ENCODE measurements at regions of chr10 and their contacts with region 1.

Region 1: DNA sequence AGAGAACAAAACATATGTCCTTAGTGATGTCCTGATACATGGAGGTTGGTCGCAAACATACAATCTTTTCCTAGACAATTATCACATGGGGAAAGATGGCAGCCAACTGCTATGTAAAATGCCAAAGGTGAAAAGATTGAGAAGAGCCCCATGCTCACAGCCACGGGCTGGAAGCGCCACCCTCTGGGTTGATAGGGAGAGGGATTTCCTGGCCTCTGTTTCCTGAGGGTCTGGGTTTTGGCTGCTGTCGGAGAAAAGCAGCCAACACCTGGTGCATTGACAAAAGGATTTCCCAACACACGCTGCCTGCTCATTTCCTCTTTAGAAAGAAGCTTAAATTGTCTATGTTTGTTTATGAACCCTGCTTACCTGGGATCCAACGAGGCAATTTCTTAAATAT is 43.8 kb downstream of the ITIH5 start:
- DNase-seq: peak in 1 of 2 experiments; percentile 59
- H3K4me3 ChIP-seq: no peak overlapping the region
- H3K27ac ChIP-seq: no peak overlapping the region
- H3K4me1 ChIP-seq: peaks cover 0 to 3% (median 0%) of the 10 kb centered on the region in 4 experiments; a peak in 1 of 7 replicates
- H3K27me3 ChIP-seq: no peaks in the 10 kb centered on the region
- CTCF ChIP-seq: peak; percentile 63 to 81 (median 73)
- EP300 ChIP-seq: no peak
- POLR2A ChIP-seq: no peak
- RAD21 ChIP-seq: peak; percentile 88 to 90

Region 2: GRCh38 chr10:7533657-7534479 is 89.1 kb before region 1 on chr10:
- CTCF ChIA-PET with region 1: interaction called, 26 read pairs
- POLR2A ChIA-PET with region 1: no interaction called
- DNase-seq: no peak
- H3K4me3 ChIP-seq: no peak overlapping the region
- H3K27ac ChIP-seq: no peak overlapping the region
- H3K4me1 ChIP-seq: 0 out of 7 replicates have a peak, but pooled peaks cover 0 to 3% (median 0%) of the 10 kb centered on the region in 4 experiments
- H3K27me3 ChIP-seq: no peaks in the 10 kb centered on the region
- CTCF ChIP-seq: no peak
- EP300 ChIP-seq: no peak
- POLR2A ChIP-seq: no peak
- RAD21 ChIP-seq: no peak

Region 3: DNA sequence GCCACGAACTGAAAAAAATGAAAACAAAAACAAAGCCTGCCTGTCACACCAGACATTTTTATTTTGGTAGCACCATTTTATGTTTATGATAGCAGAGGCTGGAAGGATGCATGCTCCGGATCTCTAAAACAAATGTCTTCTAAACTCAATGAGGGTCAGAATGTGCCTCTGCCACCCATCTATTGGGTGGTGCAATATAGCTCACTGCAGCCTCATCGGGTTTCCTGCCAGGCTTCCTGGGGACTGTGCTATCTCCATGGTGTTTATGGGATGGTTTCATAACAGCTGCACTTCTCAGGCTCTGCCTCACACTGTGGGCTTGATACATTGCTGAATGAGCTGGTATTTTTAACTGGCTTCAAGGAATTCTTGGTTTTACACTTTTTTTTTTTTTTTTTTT is 50.6 kb before region 1 on chr10:
- CTCF ChIA-PET with region 1: no interaction called
- POLR2A ChIA-PET with region 1: no interaction called
- DNase-seq: no peak
- H3K4me3 ChIP-seq: no peak overlapping the region
- H3K27ac ChIP-seq: no peak overlapping the region
- H3K4me1 ChIP-seq: peaks cover 0 to 3% (median 0%) of the 10 kb centered on the region in 4 experiments; a peak in 1 of 7 replicates
- H3K27me3 ChIP-seq: no peaks in the 10 kb centered on the region; a peak in 1 of 7 replicates
- CTCF ChIP-seq: no peak
- EP300 ChIP-seq: no peak
- POLR2A ChIP-seq: no peak
- RAD21 ChIP-seq: no peak

Region 4: DNA sequence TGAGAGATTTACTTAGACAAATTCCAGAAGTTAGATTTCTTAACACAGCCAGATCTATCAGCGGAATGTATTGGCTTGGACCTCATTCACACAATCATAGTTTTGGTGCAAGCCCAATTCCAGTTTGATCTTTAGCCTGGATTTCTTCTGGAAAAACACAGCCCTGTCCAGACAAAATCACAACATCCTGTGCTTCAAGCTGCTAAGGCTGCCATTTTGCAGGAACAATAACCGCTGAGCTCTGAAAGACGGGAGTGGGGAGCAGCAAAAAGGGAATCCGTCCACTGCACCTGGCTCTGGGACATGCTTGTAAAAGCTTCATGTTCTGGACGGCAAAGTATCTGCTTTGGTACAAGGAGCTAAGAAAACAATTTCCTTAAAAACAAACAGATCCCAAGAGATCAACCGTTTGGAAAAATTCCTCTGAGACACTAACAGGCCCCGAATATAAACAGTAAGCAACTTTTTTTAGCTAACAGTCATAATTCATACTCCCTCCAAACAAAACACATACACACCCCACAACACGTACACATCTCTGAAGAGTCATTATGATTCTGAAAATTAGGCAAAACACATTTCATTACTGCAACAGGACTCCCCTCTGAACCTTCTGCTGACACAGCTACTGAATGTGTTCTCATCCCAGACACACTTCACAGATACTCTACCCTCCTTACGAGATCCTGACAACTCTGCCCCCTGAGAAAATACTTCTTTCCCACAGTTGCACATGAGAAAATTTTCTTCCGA is 11.3 kb after region 1 on chr10:
- CTCF ChIA-PET with region 1: interaction called, 12 read pairs
- POLR2A ChIA-PET with region 1: interaction called, 3 read pairs
- DNase-seq: no peak
- H3K4me3 ChIP-seq: no peak overlapping the region
- H3K27ac ChIP-seq: no peak overlapping the region
- H3K4me1 ChIP-seq: peaks cover 0 to 14% (median 9%) of the 10 kb centered on the region in 4 experiments; a peak in 5 of 7 replicates
- H3K27me3 ChIP-seq: no peaks in the 10 kb centered on the region
- CTCF ChIP-seq: no peak
- EP300 ChIP-seq: no peak
- POLR2A ChIP-seq: no peak
- RAD21 ChIP-seq: no peak

Region 5: GRCh38 chr10:7818295-7819122 is 195.5 kb after region 1 on chr10 and contains the start of gene TAF3:
- CTCF ChIA-PET with region 1: no interaction called
- POLR2A ChIA-PET with region 1: no interaction called
- DNase-seq: peak; percentile 61 to 96
- H3K4me3 ChIP-seq: peak within 1 kb of the TSS; percentile 74 to 100 (median 100)
- H3K27ac ChIP-seq: peak within 1 kb of the TSS; percentile 76; the same call in 1 of the 2 replicates
- H3K4me1 ChIP-seq: peaks cover 0 to 7% (median 2%) of the 10 kb centered on the region in 4 experiments; a peak in 3 of 7 replicates
- H3K27me3 ChIP-seq: no peaks in the 10 kb centered on the region
- CTCF ChIP-seq: no peak
- EP300 ChIP-seq: no peak; a peak in 1 of 3 replicates
- POLR2A ChIP-seq: peak; percentile 84 to 92
- RAD21 ChIP-seq: no peak
- total RNA-seq, gene TAF3: 10.7 and 11.2 TPM in 2 replicates